ENCODE measurements at regions of chr1 and their contacts with region 1.

Region 1: DNA sequence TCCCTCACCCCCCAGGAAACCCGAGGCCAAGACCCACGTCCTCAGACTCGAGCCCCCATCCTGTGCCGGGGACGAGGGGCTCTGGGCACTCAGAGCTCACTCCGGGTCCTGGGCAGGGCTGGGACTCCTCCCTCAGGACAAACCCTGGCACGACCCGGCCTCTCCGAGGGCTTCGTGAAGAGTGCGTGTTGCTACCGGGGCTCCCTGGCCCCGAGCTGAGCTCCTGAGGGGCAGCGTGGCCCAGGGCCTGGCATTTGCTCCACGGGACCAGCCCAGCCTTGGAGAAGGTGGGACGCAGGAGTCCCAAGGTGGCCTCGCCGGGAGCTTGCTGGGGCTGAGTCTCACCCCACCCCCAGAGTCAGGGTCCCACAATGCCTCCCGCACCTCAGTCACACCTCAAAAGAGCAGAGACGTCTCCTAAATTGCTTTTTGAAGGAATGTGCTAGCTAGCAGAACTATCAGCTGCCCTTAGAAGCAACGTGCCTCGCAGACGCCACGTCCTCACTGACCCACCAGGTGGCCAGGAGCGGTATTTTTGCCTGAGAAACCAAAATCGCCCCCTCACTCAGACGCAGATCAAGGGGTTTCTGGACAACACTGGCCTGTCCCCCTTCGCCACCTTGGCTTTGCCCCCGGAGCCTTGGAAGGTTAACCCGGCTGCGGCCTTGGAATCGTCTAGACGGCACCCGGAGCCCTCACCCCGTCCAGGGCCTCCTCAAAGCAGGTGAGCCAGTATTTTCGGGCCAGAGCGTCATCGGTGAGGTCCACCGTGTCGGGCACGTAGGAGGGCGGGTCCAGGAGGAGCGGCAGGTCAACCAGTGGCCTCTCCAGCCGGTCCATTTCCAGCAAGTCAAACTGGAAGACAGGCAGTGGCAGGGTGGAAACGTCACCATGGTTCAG is 11.3 kb downstream of the PANK4 start:
- DNase-seq: no peak
- H3K4me3 ChIP-seq: no peak overlapping the region
- H3K27ac ChIP-seq: no peak overlapping the region
- H3K4me1 ChIP-seq: no peaks in the 10 kb centered on the region
- H3K27me3 ChIP-seq: no peaks in the 10 kb centered on the region
- CTCF ChIP-seq: peak in 1 of 2 donors; percentile 14

Region 2: DNA sequence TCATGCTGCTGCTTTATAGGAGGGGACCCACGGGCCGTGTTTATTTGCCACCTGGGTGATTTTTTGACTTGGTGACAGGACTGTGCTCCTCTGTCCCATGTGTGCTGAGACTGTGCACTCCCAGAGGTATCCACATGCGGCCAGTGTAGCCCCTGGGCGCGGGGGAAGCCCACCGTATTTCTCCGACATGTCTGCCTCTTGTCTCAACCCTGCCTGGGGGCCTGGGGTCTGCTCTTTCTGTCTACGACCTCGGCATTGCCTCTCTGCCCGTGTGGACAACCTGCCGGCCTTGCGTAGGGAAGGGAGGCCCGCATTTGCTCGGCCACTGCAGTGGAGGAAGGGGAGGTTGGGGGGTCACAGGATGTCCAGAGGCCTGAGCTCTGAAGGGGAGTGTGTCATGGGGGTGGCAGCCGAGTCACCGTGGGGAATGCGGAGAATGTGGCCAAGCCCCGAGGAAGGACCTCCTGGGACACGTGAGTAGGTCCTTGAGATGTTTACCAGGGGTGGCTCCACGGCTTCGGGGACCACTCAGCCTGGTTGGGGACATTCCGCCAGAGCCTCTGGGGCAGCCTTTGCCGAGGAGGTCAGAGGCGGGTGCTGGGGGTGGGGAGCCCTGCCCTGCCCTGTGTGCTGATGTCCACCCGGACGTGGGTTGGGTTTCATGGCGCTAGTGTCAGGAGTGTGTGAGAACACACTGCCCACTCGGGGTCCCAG is 453.9 kb before region 1 on chr1:
- CTCF ChIA-PET with region 1: no interaction called
- dilution Hi-C with region 1: no loop called
- in situ Hi-C with region 1: no loop called
- intact Hi-C with region 1: no loop called
- DNase-seq: no peak
- H3K4me3 ChIP-seq: no peak overlapping the region
- H3K27ac ChIP-seq: no peak overlapping the region
- H3K4me1 ChIP-seq: no peaks in the 10 kb centered on the region
- H3K27me3 ChIP-seq: no peaks in the 10 kb centered on the region
- CTCF ChIP-seq: no peak

Region 3: DNA sequence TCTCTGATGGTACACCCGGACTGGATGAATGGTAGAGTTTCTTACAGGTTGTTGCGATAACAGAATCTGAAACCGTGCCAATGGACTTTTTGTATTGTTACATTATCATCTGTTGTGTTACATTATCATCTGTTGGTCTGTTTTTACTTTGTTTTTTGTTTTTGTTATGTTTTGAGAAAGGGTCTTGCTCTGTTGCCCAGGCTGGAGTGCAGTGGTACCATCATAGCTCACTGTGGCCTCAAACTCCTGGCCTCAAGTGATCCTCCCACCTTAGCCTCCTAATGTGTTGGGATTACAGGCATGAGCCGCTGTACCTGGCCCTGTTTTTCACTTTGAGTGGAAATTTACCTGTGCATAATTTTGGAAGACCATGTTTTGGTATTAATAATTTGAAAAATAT is 92.6 kb before region 1 on chr1:
- CTCF ChIA-PET with region 1: no interaction called
- dilution Hi-C with region 1: loop called (anchors 5 kb)
- in situ Hi-C with region 1: no loop called
- intact Hi-C with region 1: no loop called
- DNase-seq: no peak
- H3K4me3 ChIP-seq: no peak overlapping the region
- H3K27ac ChIP-seq: no peak overlapping the region
- H3K4me1 ChIP-seq: peaks cover 6% of the 10 kb centered on the region
- H3K27me3 ChIP-seq: no peaks in the 10 kb centered on the region
- CTCF ChIP-seq: no peak

Region 4: DNA sequence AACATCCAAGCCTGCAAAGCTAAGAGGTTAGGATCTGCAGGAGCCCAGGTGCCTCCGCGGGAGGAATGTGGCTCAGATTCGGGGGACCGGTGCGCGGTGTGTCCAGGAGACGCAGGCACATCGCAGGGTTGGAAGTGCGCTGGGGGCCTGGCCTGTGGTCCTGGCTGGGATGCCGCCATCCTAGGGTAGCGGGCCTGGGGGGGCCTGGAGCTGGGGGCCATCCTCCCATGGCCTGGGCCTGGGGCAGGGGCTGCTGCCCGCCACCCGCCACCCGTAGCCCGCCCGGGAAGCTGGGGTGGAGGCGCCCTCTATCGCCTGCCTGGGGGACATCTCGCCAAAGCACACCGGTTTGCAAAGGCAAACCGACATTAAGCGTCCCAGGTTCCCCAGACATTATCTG is 768.7 kb after region 1 on chr1:
- CTCF ChIA-PET with region 1: no interaction called
- dilution Hi-C with region 1: loop called (anchors 10 kb)
- in situ Hi-C with region 1: no loop called
- intact Hi-C with region 1: no loop called
- DNase-seq: no peak
- H3K4me3 ChIP-seq: no peak overlapping the region
- H3K27ac ChIP-seq: no peak overlapping the region
- H3K4me1 ChIP-seq: no peaks in the 10 kb centered on the region
- H3K27me3 ChIP-seq: peaks cover 3% of the 10 kb centered on the region
- CTCF ChIP-seq: no peak